ENCODE measurements at regions of chr13 and their contacts with region 1.

Region 1: GRCh38 chr13:79775830-79776229 is 294.9 kb downstream of the NDFIP2 start:
- DNase-seq: peak; percentile 87
- H3K4me3 ChIP-seq: no peak overlapping the region
- H3K27ac ChIP-seq: no peak overlapping the region
- H3K4me1 ChIP-seq: peaks cover 4% of the 10 kb centered on the region
- H3K27me3 ChIP-seq: no peaks in the 10 kb centered on the region
- CTCF ChIP-seq: peak; percentile 65 to 67
- POLR2A ChIP-seq: no peak

Region 2: DNA sequence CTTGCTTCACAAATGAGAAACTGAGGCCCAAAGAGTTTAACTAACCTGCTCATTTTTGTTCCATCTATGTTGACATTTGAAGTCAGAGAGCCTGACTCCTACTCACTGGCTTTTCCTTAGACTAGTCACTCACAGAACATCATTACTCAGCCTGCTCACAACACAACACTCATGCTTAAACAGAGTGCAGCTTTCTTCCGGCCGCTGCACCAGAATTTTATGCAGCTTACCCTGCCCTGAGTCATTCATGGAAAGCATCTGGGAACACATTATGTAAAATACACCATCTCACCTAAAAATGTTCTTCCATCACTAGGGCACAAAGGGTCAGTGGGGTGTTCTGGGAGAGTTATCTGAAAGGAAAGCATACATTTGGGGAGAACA is 261.7 kb after region 1 on chr13:
- CTCF ChIA-PET with region 1: interaction called, 4 read pairs
- POLR2A ChIA-PET with region 1: no interaction called
- dilution Hi-C with region 1: no loop called
- intact Hi-C with region 1: loop called (anchors 5 kb)
- DNase-seq: peak; percentile 77
- H3K4me3 ChIP-seq: no peak overlapping the region
- H3K27ac ChIP-seq: peak overlapping the region; percentile 77
- H3K4me1 ChIP-seq: peaks cover 36% of the 10 kb centered on the region
- H3K27me3 ChIP-seq: no peaks in the 10 kb centered on the region
- CTCF ChIP-seq: no peak
- POLR2A ChIP-seq: no peak

Region 3: GRCh38 chr13:80235166-80235966 is 459.5 kb after region 1 on chr13:
- CTCF ChIA-PET with region 1: interaction called, 5 read pairs
- POLR2A ChIA-PET with region 1: no interaction called
- dilution Hi-C with region 1: no loop called
- intact Hi-C with region 1: loop called (anchors 5 kb)
- DNase-seq: peak; percentile 79
- H3K4me3 ChIP-seq: peak overlapping the region in 1 of 3 experiments; percentile 41
- H3K27ac ChIP-seq: peak overlapping the region; percentile 89
- H3K4me1 ChIP-seq: peaks cover 18% of the 10 kb centered on the region
- H3K27me3 ChIP-seq: no peaks in the 10 kb centered on the region
- CTCF ChIP-seq: no peak
- POLR2A ChIP-seq: no peak

Region 4: GRCh38 chr13:80551650-80552497 is 776.0 kb after region 1 on chr13:
- CTCF ChIA-PET with region 1: no interaction called
- POLR2A ChIA-PET with region 1: no interaction called
- dilution Hi-C with region 1: no loop called
- intact Hi-C with region 1: loop called (anchors 10 kb)
- DNase-seq: peak; percentile 88
- H3K4me3 ChIP-seq: no peak overlapping the region
- H3K27ac ChIP-seq: no peak overlapping the region
- H3K4me1 ChIP-seq: peaks cover 46% of the 10 kb centered on the region
- H3K27me3 ChIP-seq: no peaks in the 10 kb centered on the region
- CTCF ChIP-seq: no peak
- POLR2A ChIP-seq: no peak

Region 5: GRCh38 chr13:81207636-81208035 is 1431.8 kb after region 1 on chr13:
- CTCF ChIA-PET with region 1: no interaction called
- POLR2A ChIA-PET with region 1: no interaction called
- dilution Hi-C with region 1: no loop called
- intact Hi-C with region 1: no loop called
- DNase-seq: no peak
- H3K4me3 ChIP-seq: no peak overlapping the region
- H3K27ac ChIP-seq: no peak overlapping the region
- H3K4me1 ChIP-seq: no peaks in the 10 kb centered on the region
- H3K27me3 ChIP-seq: no peaks in the 10 kb centered on the region
- CTCF ChIP-seq: no peak
- POLR2A ChIP-seq: no peak